Activated T-helper 2 cell treated with anti-CD3 and anti-CD28 coated beads, Interferon-gamma antibody, Interleukin-2, Interleukin-4, amounts not matched to agents 10 μg/mL and 5 μg/mL and 100 μg/mL, durations not matched to agents 14 hours and 24 hours and 36 hours (primary cell): ENCODE measurements at regions of chr3 and their contacts with region 1.

Region 1: GRCh38 chr3:11651900-11652299 is 8.2 kb upstream of the VGLL4 start:
- DNase-seq: no peak
- H3K4me3 Mint-ChIP-seq: no peak overlapping the region
- H3K27ac Mint-ChIP-seq: no peak overlapping the region
- H3K4me1 Mint-ChIP-seq: peaks cover 9% of the 10 kb centered on the region
- H3K27me3 Mint-ChIP-seq: peaks cover 8% of the 10 kb centered on the region

Region 2: GRCh38 chr3:11379233-11379823 is 272.6 kb before region 1 on chr3:
- intact Hi-C with region 1: loop called (anchors 1 kb)
- DNase-seq: no peak
- H3K4me3 Mint-ChIP-seq: no peak overlapping the region
- H3K27ac Mint-ChIP-seq: no peak overlapping the region
- H3K4me1 Mint-ChIP-seq: no peaks in the 10 kb centered on the region
- H3K27me3 Mint-ChIP-seq: no peaks in the 10 kb centered on the region

Region 3: DNA sequence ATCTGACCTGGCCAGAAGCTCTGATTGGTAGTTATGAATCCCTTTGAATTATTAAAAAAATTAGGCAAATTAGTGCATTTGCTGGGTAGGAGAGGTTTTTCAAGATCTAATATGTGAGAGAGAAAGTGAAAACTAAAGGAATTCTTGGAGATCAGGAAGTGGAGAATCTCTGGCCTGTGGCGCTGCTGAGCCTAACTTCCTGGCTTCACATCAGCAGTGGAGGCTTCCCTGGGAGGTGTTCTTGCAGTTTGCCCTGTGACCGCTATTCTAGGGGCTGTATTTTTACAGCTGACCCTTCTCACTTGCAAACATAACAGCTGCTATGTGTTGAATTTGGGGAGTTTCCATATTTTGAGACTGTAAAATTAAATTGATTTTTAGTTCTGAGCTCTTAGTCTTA is 213.3 kb before region 1 on chr3:
- intact Hi-C with region 1: no loop called
- DNase-seq: no peak
- H3K4me3 Mint-ChIP-seq: no peak overlapping the region
- H3K27ac Mint-ChIP-seq: no peak overlapping the region
- H3K4me1 Mint-ChIP-seq: no peaks in the 10 kb centered on the region
- H3K27me3 Mint-ChIP-seq: no peaks in the 10 kb centered on the region

Region 4: GRCh38 chr3:11757441-11757875 is 105.6 kb after region 1 on chr3:
- intact Hi-C with region 1: no loop called
- DNase-seq: no peak
- H3K4me3 Mint-ChIP-seq: no peak overlapping the region
- H3K27ac Mint-ChIP-seq: no peak overlapping the region
- H3K4me1 Mint-ChIP-seq: no peaks in the 10 kb centered on the region
- H3K27me3 Mint-ChIP-seq: no peaks in the 10 kb centered on the region